ENCODE measurements at regions of chr6 and their contacts with region 1.

Region 1: DNA sequence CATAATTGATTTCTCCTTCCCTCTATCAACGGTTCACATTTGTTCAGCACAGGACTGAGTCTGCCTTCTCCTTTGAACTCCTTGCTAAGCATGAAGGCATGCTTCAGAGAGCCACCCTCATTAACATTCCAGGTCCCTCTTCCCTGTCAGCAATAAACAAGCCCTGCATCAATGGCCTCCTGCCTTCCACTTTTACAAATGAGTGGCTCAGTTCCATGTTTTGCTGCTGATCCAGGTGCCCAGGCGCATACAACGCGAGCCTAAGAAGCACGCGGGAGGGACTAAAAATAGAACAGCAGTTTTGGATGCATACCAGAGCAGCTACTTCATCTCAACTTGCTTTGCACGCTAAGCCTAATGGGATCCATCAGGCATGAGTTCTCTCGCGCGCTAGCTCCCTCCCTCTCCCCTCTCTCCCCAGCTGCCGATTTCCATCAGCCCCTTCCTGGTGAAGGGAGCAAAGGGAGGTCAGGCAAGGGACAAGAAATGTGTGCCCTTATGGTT is 53.4 kb downstream of the TRAF3IP2 start:
- DNase-seq: peak; percentile 86 to 92
- ATAC-seq: peak; percentile 95 to 97
- H3K4me3 ChIP-seq: peak overlapping the region in 2 of 4 donors; percentile 3 to 14
- H3K27ac ChIP-seq: peak overlapping the region; percentile 83 to 89 (median 86)
- H3K4me1 ChIP-seq: peaks cover 42 to 56% of the 10 kb centered on the region in 2 donors
- H3K27me3 ChIP-seq: no peaks in the 10 kb centered on the region
- CTCF ChIP-seq: no peak
- POLR2A ChIP-seq: no peak

Region 2: DNA sequence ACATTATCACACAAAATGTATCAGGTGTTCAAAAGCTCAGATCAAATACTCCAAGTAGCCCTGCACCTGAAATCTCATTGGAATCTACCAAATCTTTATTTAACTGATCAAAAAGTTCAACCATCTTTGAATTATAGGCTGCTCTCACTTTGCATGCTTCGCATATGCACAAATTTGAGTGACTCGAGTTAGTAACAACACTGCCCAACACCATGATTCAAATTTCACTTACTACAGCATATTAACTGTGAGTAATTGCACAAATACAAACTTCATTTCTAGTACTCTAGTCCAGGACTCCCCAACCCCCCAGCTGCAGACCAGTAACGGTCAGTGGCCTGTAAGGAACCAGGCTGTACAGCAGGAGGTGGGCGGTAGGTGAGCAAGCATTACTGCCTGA is 1423.9 kb before region 1 on chr6:
- in situ Hi-C with region 1: no loop called
- intact Hi-C with region 1: no loop called
- DNase-seq: no peak
- ATAC-seq: no peak
- H3K4me3 ChIP-seq: no peak overlapping the region
- H3K27ac ChIP-seq: no peak overlapping the region
- H3K4me1 ChIP-seq: no peaks in the 10 kb centered on the region
- H3K27me3 ChIP-seq: no peaks in the 10 kb centered on the region
- CTCF ChIP-seq: no peak
- POLR2A ChIP-seq: no peak

Region 3: DNA sequence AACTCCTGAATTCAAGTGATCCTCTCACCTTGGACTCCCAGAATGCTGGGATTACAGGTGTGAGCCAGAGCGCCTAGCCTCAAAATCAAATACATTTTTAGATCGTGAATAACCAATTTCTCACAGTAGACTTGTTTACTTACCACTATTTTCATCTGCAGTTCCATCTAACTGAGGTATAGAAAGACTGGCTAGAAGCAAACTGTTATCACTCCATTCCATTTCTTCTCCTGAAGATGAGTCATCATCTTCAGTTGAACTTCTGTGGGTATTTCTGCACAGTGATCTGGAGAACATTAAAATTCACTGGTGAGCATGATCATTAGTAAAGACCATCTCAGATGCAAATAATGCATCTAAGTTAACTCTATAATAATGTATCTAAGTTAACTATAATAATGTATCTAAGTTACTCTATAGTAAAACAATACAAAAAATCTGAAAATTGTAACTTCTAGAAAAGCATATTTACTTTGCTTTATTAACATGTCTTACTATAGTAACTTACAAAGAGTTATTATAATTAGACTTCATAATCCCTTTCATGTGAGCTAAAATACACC is 174.7 kb before region 1 on chr6:
- in situ Hi-C with region 1: no loop called
- intact Hi-C with region 1: no loop called
- DNase-seq: no peak
- ATAC-seq: no peak
- H3K4me3 ChIP-seq: no peak overlapping the region
- H3K27ac ChIP-seq: no peak overlapping the region
- H3K4me1 ChIP-seq: no peaks in the 10 kb centered on the region
- H3K27me3 ChIP-seq: no peaks in the 10 kb centered on the region
- CTCF ChIP-seq: no peak
- POLR2A ChIP-seq: no peak

Region 4: GRCh38 chr6:111534231-111534751 is 18.0 kb before region 1 on chr6:
- in situ Hi-C with region 1: no loop called
- intact Hi-C with region 1: loop called (anchors 1 kb)
- DNase-seq: peak; percentile 90 to 95
- ATAC-seq: peak; percentile 96 to 97
- H3K4me3 ChIP-seq: peak overlapping the region in 1 of 4 donors; percentile 10
- H3K27ac ChIP-seq: peak overlapping the region; percentile 80 to 90 (median 84)
- H3K4me1 ChIP-seq: peaks cover 31 to 54% of the 10 kb centered on the region in 2 donors
- H3K27me3 ChIP-seq: no peaks in the 10 kb centered on the region
- CTCF ChIP-seq: no peak
- POLR2A ChIP-seq: peak in 1 of 2 donors; percentile 21

Region 5: GRCh38 chr6:111580826-111581505 is 28.7 kb after region 1 on chr6:
- in situ Hi-C with region 1: no loop called
- intact Hi-C with region 1: loop called (anchors 2 kb)
- DNase-seq: peak in 1 of 2 donors; percentile 74
- ATAC-seq: peak in 1 of 2 donors; percentile 63
- H3K4me3 ChIP-seq: no peak overlapping the region
- H3K27ac ChIP-seq: peak overlapping the region; percentile 30 to 54 (median 49)
- H3K4me1 ChIP-seq: peaks cover 29 to 34% of the 10 kb centered on the region in 2 donors
- H3K27me3 ChIP-seq: no peaks in the 10 kb centered on the region
- CTCF ChIP-seq: no peak
- POLR2A ChIP-seq: no peak